CD8-positive, alpha-beta T cell (primary cell): ENCODE measurements at regions of chr5 and their contacts with region 1.

Region 1: GRCh38 chr5:80083101-80083890 is 48.1 kb downstream of the THBS4 start:
- DNase-seq: peak in 5 of 9 experiments; percentile 15 to 69 (median 52)
- ATAC-seq: peak; percentile 83
- H3K4me3 ChIP-seq: peak overlapping the region; percentile 10 to 25
- H3K4me3 Mint-ChIP-seq: peak overlapping the region; percentile 78
- H3K27ac ChIP-seq: no peak overlapping the region
- H3K27ac Mint-ChIP-seq: peak overlapping the region; percentile 74
- H3K4me1 ChIP-seq: peaks cover 10% of the 10 kb centered on the region
- H3K4me1 Mint-ChIP-seq: peaks cover 11% of the 10 kb centered on the region
- H3K27me3 ChIP-seq: no peaks in the 10 kb centered on the region
- H3K27me3 Mint-ChIP-seq: no peaks in the 10 kb centered on the region
- CTCF ChIP-seq: peak; percentile 61

Region 2: DNA sequence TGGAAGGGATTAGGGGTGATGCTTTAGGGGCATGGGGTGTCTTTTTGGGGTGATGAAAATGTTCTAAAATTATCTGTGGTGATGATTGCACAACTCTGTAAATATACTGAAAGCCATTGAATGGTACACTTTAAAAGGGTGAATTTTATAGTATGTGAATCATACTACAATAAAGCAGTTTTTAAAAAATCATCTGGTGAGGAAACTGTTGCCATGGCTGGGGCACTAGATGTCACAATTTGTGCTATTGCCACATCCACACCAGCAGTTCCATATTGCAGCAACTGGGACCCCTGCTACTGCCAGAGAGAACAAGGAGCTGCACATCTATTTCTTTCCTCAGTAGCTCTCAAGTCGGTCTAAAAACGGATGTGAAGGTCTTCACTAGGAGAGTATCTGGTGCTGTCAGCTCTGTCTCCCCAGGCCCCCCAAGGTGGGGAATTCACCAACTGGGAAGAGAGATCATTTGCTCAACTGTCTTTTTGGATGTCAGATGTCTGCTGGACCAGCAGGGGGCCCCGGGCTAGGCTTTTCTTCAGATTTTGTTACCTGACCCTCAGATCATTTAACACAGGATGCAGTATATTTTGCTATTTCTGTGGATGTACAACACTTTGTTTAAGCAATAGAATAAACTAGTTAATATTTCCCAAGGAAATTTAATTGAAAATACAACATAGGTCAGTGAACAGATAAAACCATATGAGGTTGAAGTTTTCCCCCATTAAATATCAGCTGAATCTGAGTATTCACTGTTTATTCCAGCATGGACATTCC is 380.5 kb before region 1 on chr5:
- CTCF ChIA-PET with region 1: interaction called, 7 read pairs
- POLR2A ChIA-PET with region 1: no interaction called
- intact Hi-C with region 1: loop called (anchors 1 to 2 kb)
- DNase-seq: peak in 7 of 9 experiments; percentile 5 to 55 (median 32)
- ATAC-seq: no peak
- H3K4me3 ChIP-seq: no peak overlapping the region
- H3K4me3 Mint-ChIP-seq: no peak overlapping the region
- H3K27ac ChIP-seq: no peak overlapping the region
- H3K27ac Mint-ChIP-seq: no peak overlapping the region
- H3K4me1 ChIP-seq: no peaks in the 10 kb centered on the region
- H3K4me1 Mint-ChIP-seq: no peaks in the 10 kb centered on the region
- H3K27me3 ChIP-seq: no peaks in the 10 kb centered on the region
- H3K27me3 Mint-ChIP-seq: no peaks in the 10 kb centered on the region
- CTCF ChIP-seq: peak; percentile 73

Region 3: DNA sequence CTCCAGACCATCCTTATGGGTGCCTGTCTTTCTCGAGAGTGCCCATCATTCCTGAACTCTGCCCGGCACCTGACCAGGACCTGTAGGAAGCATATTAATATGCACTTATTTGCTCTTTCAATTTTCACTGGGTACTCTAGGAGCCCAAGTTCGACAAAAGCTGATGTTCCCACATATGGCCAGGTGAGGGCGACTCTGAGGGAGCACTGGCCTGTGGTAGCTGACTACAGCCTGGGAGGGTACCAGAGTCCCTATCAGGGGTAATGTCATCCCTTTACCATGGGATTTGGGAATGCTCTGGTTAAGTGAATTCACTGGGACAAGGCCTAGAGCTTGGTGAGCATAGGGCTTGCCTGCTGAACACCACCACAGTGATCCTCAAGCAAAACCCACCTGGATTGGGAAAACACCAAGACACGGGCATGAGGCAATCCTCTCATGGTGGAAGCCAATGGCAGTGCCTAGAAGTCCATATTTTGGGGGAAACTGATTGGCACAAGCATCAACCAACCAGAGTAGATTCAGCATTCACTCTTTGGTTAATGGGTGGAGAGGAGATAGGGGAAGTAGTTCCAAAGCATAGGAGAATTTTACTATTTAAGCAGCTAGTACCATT is 204.5 kb before region 1 on chr5:
- CTCF ChIA-PET with region 1: interaction called, 6 read pairs
- POLR2A ChIA-PET with region 1: no interaction called
- intact Hi-C with region 1: loop called in 1 of 2 experiments (anchors 2 kb)
- DNase-seq: peak in 3 of 9 experiments; percentile 10 to 31 (median 15)
- ATAC-seq: no peak
- H3K4me3 ChIP-seq: no peak overlapping the region
- H3K4me3 Mint-ChIP-seq: no peak overlapping the region
- H3K27ac ChIP-seq: no peak overlapping the region
- H3K27ac Mint-ChIP-seq: no peak overlapping the region
- H3K4me1 ChIP-seq: no peaks in the 10 kb centered on the region
- H3K4me1 Mint-ChIP-seq: peaks cover 2% of the 10 kb centered on the region
- H3K27me3 ChIP-seq: no peaks in the 10 kb centered on the region
- H3K27me3 Mint-ChIP-seq: no peaks in the 10 kb centered on the region
- CTCF ChIP-seq: no peak

Region 4: DNA sequence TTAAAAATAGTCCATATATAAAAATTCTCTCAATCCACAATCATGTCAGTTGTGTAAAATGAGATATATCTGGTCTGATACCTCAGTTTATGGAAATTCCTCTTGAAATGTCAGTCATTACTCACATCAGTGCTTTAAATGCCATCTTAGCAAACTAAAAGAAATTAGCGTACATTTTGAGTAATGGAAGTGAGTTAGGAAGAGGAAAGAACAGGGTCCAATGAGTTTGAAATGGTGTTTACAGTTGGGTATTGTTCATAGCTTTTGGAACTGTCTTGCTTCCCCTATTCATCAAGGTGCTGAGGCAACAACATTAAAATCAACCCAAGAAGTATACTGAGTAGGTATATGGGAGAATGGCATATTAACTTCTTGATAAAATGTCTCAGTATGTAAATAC is 83.6 kb before region 1 on chr5:
- CTCF ChIA-PET with region 1: interaction called, 3 read pairs
- POLR2A ChIA-PET with region 1: no interaction called
- intact Hi-C with region 1: loop called in 1 of 2 experiments (anchors 5 kb)
- DNase-seq: no peak
- ATAC-seq: no peak
- H3K4me3 ChIP-seq: no peak overlapping the region
- H3K4me3 Mint-ChIP-seq: no peak overlapping the region
- H3K27ac ChIP-seq: no peak overlapping the region
- H3K27ac Mint-ChIP-seq: no peak overlapping the region
- H3K4me1 ChIP-seq: no peaks in the 10 kb centered on the region
- H3K4me1 Mint-ChIP-seq: no peaks in the 10 kb centered on the region
- H3K27me3 ChIP-seq: no peaks in the 10 kb centered on the region
- H3K27me3 Mint-ChIP-seq: peaks cover 8% of the 10 kb centered on the region
- CTCF ChIP-seq: no peak

Region 5: GRCh38 chr5:80275347-80275746 is 192.1 kb after region 1 on chr5:
- CTCF ChIA-PET with region 1: interaction called, 17 read pairs
- POLR2A ChIA-PET with region 1: no interaction called
- intact Hi-C with region 1: no loop called
- DNase-seq: peak in 3 of 9 experiments; percentile 33 to 69 (median 52)
- ATAC-seq: peak; percentile 75
- H3K4me3 ChIP-seq: no peak overlapping the region
- H3K4me3 Mint-ChIP-seq: no peak overlapping the region
- H3K27ac ChIP-seq: no peak overlapping the region
- H3K27ac Mint-ChIP-seq: no peak overlapping the region
- H3K4me1 ChIP-seq: peaks cover 23% of the 10 kb centered on the region
- H3K4me1 Mint-ChIP-seq: peaks cover 24% of the 10 kb centered on the region
- H3K27me3 ChIP-seq: no peaks in the 10 kb centered on the region
- H3K27me3 Mint-ChIP-seq: no peaks in the 10 kb centered on the region
- CTCF ChIP-seq: peak; percentile 51

Region 6: GRCh38 chr5:80399526-80400239 is 316.4 kb after region 1 on chr5:
- CTCF ChIA-PET with region 1: no interaction called
- POLR2A ChIA-PET with region 1: no interaction called
- intact Hi-C with region 1: loop called in 1 of 2 experiments (anchors 5 kb)
- DNase-seq: peak in 1 of 9 experiments; percentile 34
- ATAC-seq: no peak
- H3K4me3 ChIP-seq: no peak overlapping the region
- H3K4me3 Mint-ChIP-seq: no peak overlapping the region
- H3K27ac ChIP-seq: no peak overlapping the region
- H3K27ac Mint-ChIP-seq: no peak overlapping the region
- H3K4me1 ChIP-seq: no peaks in the 10 kb centered on the region
- H3K4me1 Mint-ChIP-seq: no peaks in the 10 kb centered on the region
- H3K27me3 ChIP-seq: peaks cover 0 to 4% of the 10 kb centered on the region in 2 experiments
- H3K27me3 Mint-ChIP-seq: peaks cover 5% of the 10 kb centered on the region
- CTCF ChIP-seq: no peak

Region 7: DNA sequence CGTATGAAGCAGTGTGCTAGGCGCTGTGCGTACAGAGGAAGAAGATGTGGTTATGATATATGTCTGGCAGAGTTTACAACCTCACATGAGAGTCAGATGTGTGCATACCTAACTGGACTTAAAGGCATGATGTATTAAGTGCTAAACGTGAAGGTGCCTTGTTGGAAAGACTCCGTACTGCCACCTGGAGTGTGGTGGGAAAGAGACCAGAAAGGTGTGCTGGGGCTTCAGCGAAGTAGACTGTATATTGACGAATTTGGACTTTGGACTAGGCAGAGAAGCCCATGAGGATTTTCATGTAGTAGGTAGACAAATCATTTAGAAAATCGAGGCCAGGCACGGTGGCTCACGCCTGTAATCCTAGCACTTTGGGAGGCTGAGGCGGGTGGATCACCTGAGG is 596.4 kb after region 1 on chr5:
- CTCF ChIA-PET with region 1: no interaction called
- POLR2A ChIA-PET with region 1: no interaction called
- intact Hi-C with region 1: no loop called
- DNase-seq: no peak
- ATAC-seq: no peak
- H3K4me3 ChIP-seq: no peak overlapping the region
- H3K4me3 Mint-ChIP-seq: no peak overlapping the region
- H3K27ac ChIP-seq: no peak overlapping the region
- H3K27ac Mint-ChIP-seq: no peak overlapping the region
- H3K4me1 ChIP-seq: no peaks in the 10 kb centered on the region
- H3K4me1 Mint-ChIP-seq: peaks cover 2% of the 10 kb centered on the region
- H3K27me3 ChIP-seq: no peaks in the 10 kb centered on the region
- H3K27me3 Mint-ChIP-seq: no peaks in the 10 kb centered on the region
- CTCF ChIP-seq: no peak